ENCODE measurements at regions of chrX and their contacts with region 1.

Region 1: GRCh38 chrX:13487731-13488523 is 81.5 kb upstream of the EGFL6 start:
- DNase-seq: peak in 1 of 2 donors; percentile 43
- ATAC-seq: peak; percentile 71 to 90 (median 78)
- H3K4me3 ChIP-seq: no peak overlapping the region
- H3K27ac ChIP-seq: peak overlapping the region; percentile 40 to 82 (median 70)
- H3K4me1 ChIP-seq: peaks cover 0 to 29% (median 6%) of the 10 kb centered on the region in 9 donors
- H3K27me3 ChIP-seq: peaks cover 0 to 55% (median 0%) of the 10 kb centered on the region in 7 donors
- CTCF ChIP-seq: peak; percentile 26 to 68 (median 62)

Region 2: GRCh38 chrX:12814420-12814819 is 673.5 kb before region 1 on chrX:
- intact Hi-C with region 1: loop called in 4 of 10 experiments (anchors 5 to 10 kb)
- DNase-seq: peak in 1 of 2 donors; percentile 13
- ATAC-seq: no peak
- H3K4me3 ChIP-seq: no peak overlapping the region
- H3K27ac ChIP-seq: no peak overlapping the region
- H3K4me1 ChIP-seq: no peaks in the 10 kb centered on the region
- H3K27me3 ChIP-seq: peaks cover 0 to 41% (median 0%) of the 10 kb centered on the region in 7 donors
- CTCF ChIP-seq: peak in 8 of 9 donors; percentile 15 to 56 (median 46)

Region 3: DNA sequence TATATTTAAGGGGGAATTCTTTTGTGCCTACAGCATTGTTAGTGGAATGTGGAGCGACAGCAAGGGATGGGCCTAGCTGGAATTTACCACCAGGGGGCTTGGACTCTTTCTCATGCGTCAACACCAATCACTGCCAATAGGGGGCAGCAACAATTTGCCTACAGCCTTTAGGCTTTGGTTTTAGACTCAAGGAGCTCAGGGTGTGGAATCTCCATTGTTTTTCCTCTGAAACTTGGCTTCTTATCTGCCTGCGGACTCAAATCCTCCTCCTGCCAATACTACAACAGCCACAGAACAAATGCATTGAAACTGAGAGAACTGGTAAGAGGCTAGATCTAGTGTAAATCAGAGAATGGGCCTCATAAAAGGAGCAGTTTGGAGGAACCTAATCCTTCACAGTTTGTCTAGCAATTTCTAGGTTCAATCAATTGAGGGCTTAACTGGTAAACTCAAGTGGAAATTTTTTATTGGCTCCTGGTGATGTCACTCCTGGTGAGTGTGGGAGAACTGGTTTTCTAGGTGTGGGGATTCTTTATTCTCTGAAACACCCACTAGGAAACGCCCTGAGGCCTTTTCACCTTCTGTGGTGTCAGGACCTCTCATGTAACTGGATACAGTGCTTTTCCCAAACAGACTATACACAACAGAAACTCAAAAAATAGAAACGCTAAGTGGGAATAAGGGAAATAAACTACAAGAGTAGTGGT is 540.9 kb before region 1 on chrX:
- intact Hi-C with region 1: loop called in 4 of 10 experiments (anchors 1 to 2 kb)
- DNase-seq: peak in 1 of 2 donors; percentile 69
- ATAC-seq: peak; percentile 49 to 86 (median 74)
- H3K4me3 ChIP-seq: no peak overlapping the region
- H3K27ac ChIP-seq: peak overlapping the region in 8 of 10 donors; percentile 15 to 83 (median 64)
- H3K4me1 ChIP-seq: peaks cover 0 to 56% (median 12%) of the 10 kb centered on the region in 9 donors
- H3K27me3 ChIP-seq: peaks cover 0 to 25% (median 0%) of the 10 kb centered on the region in 7 donors
- CTCF ChIP-seq: peak; percentile 64 to 97 (median 84)

Region 4: GRCh38 chrX:13254076-13254785 is 233.7 kb before region 1 on chrX:
- intact Hi-C with region 1: loop called in 1 of 10 experiments (anchors 10 kb)
- DNase-seq: no peak
- ATAC-seq: peak in 4 of 8 donors; percentile 36 to 52 (median 47)
- H3K4me3 ChIP-seq: no peak overlapping the region
- H3K27ac ChIP-seq: peak overlapping the region in 1 of 10 donors; percentile 13
- H3K4me1 ChIP-seq: peaks cover 0 to 22% (median 0%) of the 10 kb centered on the region in 9 donors
- H3K27me3 ChIP-seq: peaks cover 0 to 48% (median 0%) of the 10 kb centered on the region in 7 donors
- CTCF ChIP-seq: peak in 2 of 9 donors; percentile 14 to 18

Region 5: DNA sequence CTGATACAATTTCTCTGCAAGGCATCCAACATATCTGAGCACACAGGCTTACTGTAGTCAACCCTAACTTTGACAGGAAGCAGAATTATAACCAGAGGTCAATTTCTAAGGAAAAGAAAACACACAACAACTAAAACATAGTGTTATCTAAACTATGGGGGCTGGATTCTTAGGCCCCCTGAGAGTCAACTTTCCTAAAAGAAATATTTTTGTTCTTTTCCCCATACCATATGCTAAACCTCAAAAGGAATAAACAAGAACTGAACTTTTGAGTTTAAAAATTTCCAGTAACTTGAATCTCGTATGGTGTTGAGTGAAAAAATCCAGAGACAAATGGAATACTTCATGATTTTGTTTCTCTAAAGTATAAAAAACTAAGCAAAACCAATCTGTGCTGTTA is 210.9 kb before region 1 on chrX:
- intact Hi-C with region 1: no loop called
- DNase-seq: no peak
- ATAC-seq: peak in 1 of 8 donors; percentile 22
- H3K4me3 ChIP-seq: no peak overlapping the region
- H3K27ac ChIP-seq: peak overlapping the region in 3 of 10 donors; percentile 5 to 28 (median 10)
- H3K4me1 ChIP-seq: peaks cover 0 to 5% (median 0%) of the 10 kb centered on the region in 9 donors
- H3K27me3 ChIP-seq: peaks cover 0 to 76% (median 0%) of the 10 kb centered on the region in 7 donors
- CTCF ChIP-seq: no peak

Region 6: GRCh38 chrX:13357925-13358324 is 130.0 kb before region 1 on chrX:
- intact Hi-C with region 1: loop called in 1 of 10 experiments (anchors 10 kb)
- DNase-seq: peak in 1 of 2 donors; percentile 7
- ATAC-seq: peak in 6 of 8 donors; percentile 39 to 77 (median 54)
- H3K4me3 ChIP-seq: no peak overlapping the region
- H3K27ac ChIP-seq: peak overlapping the region in 5 of 10 donors; percentile 37 to 62 (median 46)
- H3K4me1 ChIP-seq: peaks cover 0 to 19% (median 0%) of the 10 kb centered on the region in 9 donors
- H3K27me3 ChIP-seq: peaks cover 0 to 28% (median 0%) of the 10 kb centered on the region in 7 donors
- CTCF ChIP-seq: no peak

Region 7: DNA sequence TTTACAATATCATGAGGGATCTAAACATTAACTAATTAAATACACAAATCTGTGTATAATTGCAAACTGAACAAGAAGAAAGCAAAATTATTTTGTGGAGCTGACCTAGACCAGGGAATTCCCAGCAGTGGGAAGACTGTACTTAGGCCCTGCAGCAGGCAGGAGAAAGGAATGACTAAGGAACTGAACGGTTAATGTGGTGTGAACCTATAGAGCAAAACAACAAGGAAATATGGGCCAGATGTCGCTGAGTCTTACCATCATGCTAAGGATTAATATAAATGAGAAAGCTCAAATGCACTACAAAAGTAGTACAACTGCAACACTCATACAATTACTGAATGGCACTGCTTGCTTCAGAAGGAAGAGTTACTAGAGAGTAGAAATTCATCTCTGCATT is 47.8 kb before region 1 on chrX:
- intact Hi-C with region 1: no loop called
- DNase-seq: no peak
- ATAC-seq: no peak
- H3K4me3 ChIP-seq: no peak overlapping the region
- H3K27ac ChIP-seq: no peak overlapping the region
- H3K4me1 ChIP-seq: no peaks in the 10 kb centered on the region
- H3K27me3 ChIP-seq: peaks cover 0 to 31% (median 0%) of the 10 kb centered on the region in 7 donors
- CTCF ChIP-seq: no peak

Region 8: GRCh38 chrX:13550346-13550745 is 62.4 kb after region 1 on chrX:
- intact Hi-C with region 1: no loop called
- DNase-seq: no peak
- ATAC-seq: no peak
- H3K4me3 ChIP-seq: no peak overlapping the region
- H3K27ac ChIP-seq: no peak overlapping the region
- H3K4me1 ChIP-seq: no peaks in the 10 kb centered on the region
- H3K27me3 ChIP-seq: peaks cover 0 to 89% (median 0%) of the 10 kb centered on the region in 7 donors
- CTCF ChIP-seq: no peak

Region 9: GRCh38 chrX:13598877-13599276 is 111.0 kb after region 1 on chrX:
- intact Hi-C with region 1: no loop called
- DNase-seq: no peak
- ATAC-seq: no peak
- H3K4me3 ChIP-seq: no peak overlapping the region
- H3K27ac ChIP-seq: peak overlapping the region in 1 of 10 donors; percentile 53
- H3K4me1 ChIP-seq: peaks cover 0 to 7% (median 0%) of the 10 kb centered on the region in 9 donors
- H3K27me3 ChIP-seq: peaks cover 0 to 57% (median 0%) of the 10 kb centered on the region in 7 donors
- CTCF ChIP-seq: peak in 2 of 9 donors; percentile 9 to 22